Activated naive CD8-positive, alpha-beta T cell treated with anti-CD3 and anti-CD28 coated beads, Interleukin-2, amount 10 ng/mL, durations not matched to agents 7 days and 5 days (primary cell): ENCODE measurements at regions of chr4 and their contacts with region 1.

Region 1: DNA sequence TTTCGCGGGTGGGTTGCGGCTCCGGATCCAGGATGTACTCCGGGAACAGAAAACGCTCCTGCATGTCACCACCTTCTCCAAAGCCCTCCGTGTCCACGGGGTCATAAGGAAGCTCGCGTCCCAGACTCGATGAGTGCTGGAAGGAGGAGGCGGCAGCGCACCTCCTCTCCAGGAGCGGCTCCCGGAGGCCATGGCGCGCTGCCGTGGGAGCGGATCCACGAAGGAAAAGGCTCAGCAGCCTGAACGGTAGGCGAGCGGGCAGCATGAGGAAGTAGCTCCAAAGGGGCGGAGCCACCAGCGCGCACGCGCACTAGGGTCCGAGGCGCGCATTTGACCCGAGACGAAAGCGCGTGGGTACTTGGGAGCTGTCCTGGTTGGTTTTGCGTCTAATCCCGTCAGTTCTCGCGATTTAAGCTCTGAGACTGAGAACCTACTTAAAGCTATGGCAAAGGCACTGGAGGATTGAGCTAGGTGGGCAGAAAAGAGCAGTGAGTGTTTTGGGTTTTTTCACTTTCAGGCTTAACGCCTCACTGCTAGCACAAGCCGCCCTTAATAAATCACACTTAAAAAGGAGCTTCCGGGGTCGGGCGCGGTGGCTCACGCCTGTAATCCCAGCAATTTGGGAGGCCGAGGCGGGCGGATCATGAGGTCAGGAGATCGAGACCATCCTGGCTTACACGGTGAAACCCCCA is at the start of gene NOA1:
- DNase-seq: peak; percentile 99
- ATAC-seq: peak; percentile 82
- H3K4me3 Mint-ChIP-seq: peak within 1 kb of the TSS; percentile 99
- H3K27ac Mint-ChIP-seq: peak within 1 kb of the TSS; percentile 99
- H3K4me1 Mint-ChIP-seq: peaks cover 41% of the 10 kb centered on the region
- H3K27me3 Mint-ChIP-seq: no peaks in the 10 kb centered on the region
- total RNA-seq, gene NOA1: 22.4 to 23.6 TPM

Region 2: GRCh38 chr4:56387023-56388001 is 590.2 kb before region 1 on chr4 and contains the start of gene AASDH:
- POLR2A ChIA-PET with region 1: interaction called, 22 read pairs
- DNase-seq: peak; percentile 96
- ATAC-seq: peak; percentile 93
- H3K4me3 Mint-ChIP-seq: peak within 1 kb of the TSS; percentile 94
- H3K27ac Mint-ChIP-seq: peak within 1 kb of the TSS; percentile 99
- H3K4me1 Mint-ChIP-seq: peaks cover 21% of the 10 kb centered on the region
- H3K27me3 Mint-ChIP-seq: no peaks in the 10 kb centered on the region
- total RNA-seq, gene AASDH: 10.3 to 12.8 TPM

Region 3: GRCh38 chr4:56435306-56435926 is 542.1 kb before region 1 on chr4 and contains the start of gene PPAT:
- POLR2A ChIA-PET with region 1: interaction called, 43 read pairs
- DNase-seq: peak; percentile 99
- ATAC-seq: peak; percentile 81
- H3K4me3 Mint-ChIP-seq: peak within 1 kb of the TSS; percentile 99
- H3K27ac Mint-ChIP-seq: peak within 1 kb of the TSS; percentile 97
- H3K4me1 Mint-ChIP-seq: peaks cover 41% of the 10 kb centered on the region
- H3K27me3 Mint-ChIP-seq: no peaks in the 10 kb centered on the region
- total RNA-seq, gene PPAT: 20.8 to 22.4 TPM

Region 4: DNA sequence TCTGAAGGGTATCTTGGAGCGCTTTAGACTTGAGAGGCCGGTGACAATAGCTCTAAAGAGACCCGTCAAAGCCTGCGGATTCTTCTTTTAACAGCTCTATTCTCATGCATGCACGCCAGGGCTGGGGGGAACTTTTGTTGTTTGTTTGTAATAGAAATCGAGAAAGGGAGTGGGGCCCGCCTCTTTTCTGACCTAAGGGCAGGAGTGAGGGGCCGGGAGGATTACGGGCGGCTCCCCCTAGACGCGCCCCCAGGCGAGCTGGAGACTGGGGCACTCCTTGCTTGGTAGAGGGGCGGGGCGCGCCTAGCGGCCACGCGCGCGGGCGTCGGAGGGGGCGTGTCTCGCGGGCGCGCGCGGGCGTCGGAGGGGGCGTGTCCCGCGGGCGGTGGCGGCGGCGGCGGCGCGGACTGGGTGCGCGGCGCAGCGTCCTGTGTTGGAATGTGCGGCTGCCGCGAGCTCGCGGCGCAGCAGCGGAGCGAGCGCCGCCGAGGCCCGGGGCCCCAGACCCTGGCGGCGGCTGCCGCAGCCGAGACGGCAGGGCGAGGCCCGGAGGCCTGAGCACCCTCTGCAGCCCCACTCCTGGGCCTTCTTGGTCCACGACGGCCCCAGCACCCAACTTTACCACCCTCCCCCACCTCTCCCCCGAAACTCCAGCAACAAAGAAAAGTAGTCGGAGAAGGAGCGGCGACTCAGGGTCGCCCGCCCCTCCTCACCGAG is 69.8 kb before region 1 on chr4 and contains the start of gene REST:
- POLR2A ChIA-PET with region 1: interaction called, 107 read pairs
- DNase-seq: peak; percentile 92
- ATAC-seq: peak; percentile 57
- H3K4me3 Mint-ChIP-seq: peak within 1 kb of the TSS; percentile 84
- H3K27ac Mint-ChIP-seq: peak within 1 kb of the TSS; percentile 78
- H3K4me1 Mint-ChIP-seq: peaks cover 35% of the 10 kb centered on the region
- H3K27me3 Mint-ChIP-seq: peaks cover 3% of the 10 kb centered on the region
- total RNA-seq, gene REST: 52.2 to 56.7 TPM

Region 5: GRCh38 chr4:56927196-56927595 is 50.3 kb before region 1 on chr4:
- POLR2A ChIA-PET with region 1: no interaction called
- DNase-seq: no peak
- ATAC-seq: no peak
- H3K4me3 Mint-ChIP-seq: no peak overlapping the region
- H3K27ac Mint-ChIP-seq: no peak overlapping the region
- H3K4me1 Mint-ChIP-seq: no peaks in the 10 kb centered on the region
- H3K27me3 Mint-ChIP-seq: no peaks in the 10 kb centered on the region

Region 6: GRCh38 chr4:56937262-56937661 is 40.2 kb before region 1 on chr4:
- POLR2A ChIA-PET with region 1: no interaction called
- DNase-seq: no peak
- ATAC-seq: no peak
- H3K4me3 Mint-ChIP-seq: no peak overlapping the region
- H3K27ac Mint-ChIP-seq: no peak overlapping the region
- H3K4me1 Mint-ChIP-seq: peaks cover 1% of the 10 kb centered on the region
- H3K27me3 Mint-ChIP-seq: no peaks in the 10 kb centered on the region

Region 7: DNA sequence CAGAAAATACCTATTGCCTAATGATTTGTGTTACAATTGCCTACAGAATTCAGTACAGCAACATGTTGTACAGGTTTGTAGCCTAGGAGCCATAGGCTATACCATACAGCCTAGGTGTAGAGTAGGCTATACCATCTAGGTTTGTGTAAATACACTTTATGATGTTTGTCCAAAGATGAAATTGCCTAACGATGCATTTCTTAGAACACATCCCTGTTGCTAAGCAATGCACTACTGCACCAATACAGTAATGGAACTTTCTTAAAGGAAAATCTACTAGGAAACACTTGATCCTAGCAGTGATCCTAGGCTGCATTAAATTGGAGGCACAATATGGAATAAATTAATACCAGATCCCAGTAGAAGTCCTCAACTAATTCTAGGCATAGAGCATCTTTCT is 18.4 kb before region 1 on chr4:
- POLR2A ChIA-PET with region 1: interaction called, 11 read pairs
- DNase-seq: no peak
- ATAC-seq: no peak
- H3K4me3 Mint-ChIP-seq: no peak overlapping the region
- H3K27ac Mint-ChIP-seq: no peak overlapping the region
- H3K4me1 Mint-ChIP-seq: no peaks in the 10 kb centered on the region
- H3K27me3 Mint-ChIP-seq: no peaks in the 10 kb centered on the region

Region 8: DNA sequence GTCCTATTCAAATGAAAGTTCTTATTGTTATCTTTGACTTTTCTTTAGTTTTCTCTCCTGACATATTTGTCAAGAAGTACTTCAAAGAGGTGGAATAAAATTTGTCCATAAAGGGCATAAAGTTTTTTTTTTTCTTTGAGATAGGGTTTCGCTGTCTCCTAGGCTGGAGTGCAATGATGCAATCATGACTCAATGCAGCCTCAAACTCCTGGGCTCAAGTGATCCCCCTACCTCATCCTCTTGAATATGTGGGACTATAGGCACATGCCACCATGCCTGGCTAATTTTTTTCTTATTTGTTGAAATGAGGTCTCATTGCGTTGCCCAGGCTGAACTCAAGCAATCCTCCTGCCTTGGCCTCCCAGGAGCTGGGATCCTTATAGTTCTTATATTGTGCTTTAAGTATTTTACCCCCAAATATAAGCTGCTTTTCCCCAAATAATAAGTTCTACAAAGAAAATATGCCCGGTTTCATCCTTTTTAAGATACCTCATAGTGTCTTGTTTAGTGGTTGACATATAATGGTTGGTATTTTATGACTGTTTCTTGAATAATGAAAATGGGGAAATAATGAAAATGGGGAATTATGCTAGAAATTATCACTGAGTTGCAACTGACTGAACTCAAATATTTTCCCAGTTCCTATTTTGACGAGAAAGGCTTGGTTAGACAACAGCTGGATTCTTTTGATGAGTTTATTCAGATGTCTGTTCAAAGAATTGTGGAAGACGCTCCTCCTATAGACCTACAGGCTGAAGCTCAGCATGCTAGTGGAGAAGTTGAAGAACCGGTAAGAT is 12.8 kb after region 1 on chr4:
- POLR2A ChIA-PET with region 1: interaction called, 22 read pairs
- DNase-seq: no peak
- ATAC-seq: no peak
- H3K4me3 Mint-ChIP-seq: no peak overlapping the region
- H3K27ac Mint-ChIP-seq: no peak overlapping the region
- H3K4me1 Mint-ChIP-seq: peaks cover 15% of the 10 kb centered on the region
- H3K27me3 Mint-ChIP-seq: no peaks in the 10 kb centered on the region

Region 9: DNA sequence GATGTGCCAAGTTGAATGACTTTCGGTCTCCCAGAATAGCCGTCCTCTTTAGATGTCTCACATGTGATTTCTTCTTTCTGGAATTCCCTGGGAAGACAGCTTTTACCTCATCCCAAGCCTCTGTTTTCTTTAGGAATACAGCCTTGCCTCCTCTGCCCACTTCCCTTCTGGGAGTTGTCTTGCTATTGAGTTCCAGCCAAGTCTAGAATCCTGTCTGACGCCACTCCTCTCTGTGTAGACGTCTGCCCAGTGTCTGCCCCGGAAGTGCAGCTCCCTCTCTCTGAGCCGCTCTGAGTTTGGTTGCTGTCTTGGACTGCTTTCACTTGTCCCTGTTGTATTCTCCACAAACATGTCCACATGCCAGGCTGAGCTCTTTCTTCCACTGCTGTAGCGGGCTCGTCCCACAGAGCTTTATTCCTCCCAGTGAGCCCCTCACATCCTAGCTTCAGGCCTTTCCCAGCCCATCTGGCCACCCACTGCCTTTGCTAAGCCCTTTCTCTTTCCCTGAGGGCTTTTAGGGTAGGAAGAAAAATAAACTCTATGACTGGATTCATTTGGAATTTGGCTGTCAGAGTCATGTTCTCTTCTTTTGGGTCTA is 141.7 kb after region 1 on chr4:
- POLR2A ChIA-PET with region 1: interaction called, 10 read pairs
- DNase-seq: no peak
- ATAC-seq: no peak
- H3K4me3 Mint-ChIP-seq: no peak overlapping the region
- H3K27ac Mint-ChIP-seq: no peak overlapping the region
- H3K4me1 Mint-ChIP-seq: no peaks in the 10 kb centered on the region
- H3K27me3 Mint-ChIP-seq: peaks cover 22% of the 10 kb centered on the region